ENCODE measurements at regions of chr10 and their contacts with region 1.

Region 1: GRCh38 chr10:92965314-92965713 is 95.3 kb upstream of the CYP26C1 start:
- DNase-seq: peak in 1 of 2 experiments; percentile 49
- H3K4me3 ChIP-seq: no peak overlapping the region
- H3K4me3 Mint-ChIP-seq: no peak overlapping the region
- H3K27ac Mint-ChIP-seq: no peak overlapping the region
- H3K4me1 ChIP-seq: no peaks in the 10 kb centered on the region
- H3K4me1 Mint-ChIP-seq: no peaks in the 10 kb centered on the region
- H3K27me3 ChIP-seq: no peaks in the 10 kb centered on the region
- H3K27me3 Mint-ChIP-seq: no peaks in the 10 kb centered on the region
- CTCF ChIP-seq: peak; percentile 56 to 59

Region 2: DNA sequence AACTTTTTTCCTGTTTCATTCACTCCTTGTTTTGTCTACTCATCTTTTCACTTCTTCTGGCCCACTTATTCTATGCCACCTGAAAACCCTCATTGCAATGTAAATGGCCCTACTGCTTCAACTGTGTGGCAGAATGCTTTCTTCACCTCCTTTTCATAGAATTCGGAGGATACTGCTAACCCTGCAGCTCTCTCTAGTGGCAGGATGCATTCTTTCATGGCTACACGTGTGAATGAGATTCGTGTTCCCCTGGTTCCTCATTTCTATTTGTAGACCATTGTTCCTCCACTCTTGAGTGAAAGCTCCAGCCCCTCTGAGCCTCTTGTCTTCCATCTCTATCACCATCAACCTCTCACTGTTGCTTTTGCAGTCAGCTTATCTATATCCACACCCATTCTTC is 74.4 kb after region 1 on chr10:
- CTCF ChIA-PET with region 1: no interaction called
- POLR2A ChIA-PET with region 1: no interaction called
- intact Hi-C with region 1: loop called (anchors 2 kb)
- DNase-seq: peak in 1 of 2 experiments; percentile 45
- H3K4me3 ChIP-seq: no peak overlapping the region
- H3K4me3 Mint-ChIP-seq: no peak overlapping the region
- H3K27ac Mint-ChIP-seq: no peak overlapping the region
- H3K4me1 ChIP-seq: no peaks in the 10 kb centered on the region
- H3K4me1 Mint-ChIP-seq: no peaks in the 10 kb centered on the region
- H3K27me3 ChIP-seq: no peaks in the 10 kb centered on the region
- H3K27me3 Mint-ChIP-seq: no peaks in the 10 kb centered on the region
- CTCF ChIP-seq: peak; percentile 32 to 59